PC-3 (cell line): ENCODE measurements at regions of chr21 and their contacts with region 1.

Region 1: GRCh38 chr21:36927719-36928117 is 38.8 kb downstream of the HLCS start:
- DNase-seq: peak; percentile 95
- ATAC-seq: peak; percentile 93
- H3K4me3 ChIP-seq: no peak overlapping the region
- H3K27ac ChIP-seq: peak overlapping the region; percentile 68
- H3K4me1 ChIP-seq: peaks cover 22% of the 10 kb centered on the region
- H3K27me3 ChIP-seq: no peaks in the 10 kb centered on the region
- CTCF ChIP-seq: peak; percentile 98

Region 2: GRCh38 chr21:35882791-35883240 is 1044.9 kb before region 1 on chr21:
- CTCF ChIA-PET with region 1: no interaction called
- POLR2A ChIA-PET with region 1: no interaction called
- intact Hi-C with region 1: no loop called
- DNase-seq: no peak
- ATAC-seq: no peak
- H3K4me3 ChIP-seq: no peak overlapping the region
- H3K27ac ChIP-seq: no peak overlapping the region
- H3K4me1 ChIP-seq: no peaks in the 10 kb centered on the region
- H3K27me3 ChIP-seq: peaks cover 38% of the 10 kb centered on the region
- CTCF ChIP-seq: no peak

Region 3: DNA sequence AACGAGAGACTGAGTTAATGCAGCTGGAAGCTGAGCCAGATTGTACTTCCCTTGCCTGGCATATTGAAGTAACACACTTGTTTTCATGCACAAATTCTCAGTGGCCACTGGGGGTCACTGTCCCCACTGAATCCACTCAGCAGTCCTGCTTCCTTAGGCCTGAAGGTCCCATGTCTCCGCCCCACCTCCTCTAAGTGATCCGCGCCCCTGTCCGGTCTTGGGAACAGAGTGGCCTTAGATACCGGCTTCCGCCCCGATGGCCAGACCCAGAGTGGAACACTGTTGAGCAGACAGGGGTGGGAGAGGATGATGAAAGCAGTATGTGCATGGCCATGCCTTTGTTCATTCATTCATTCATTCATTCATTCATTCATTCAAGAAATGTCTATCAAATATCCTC is 507.7 kb before region 1 on chr21:
- CTCF ChIA-PET with region 1: no interaction called
- POLR2A ChIA-PET with region 1: no interaction called
- intact Hi-C with region 1: loop called (anchors 2 kb)
- DNase-seq: peak; percentile 90
- ATAC-seq: peak; percentile 92
- H3K4me3 ChIP-seq: no peak overlapping the region
- H3K27ac ChIP-seq: no peak overlapping the region; the same call in 1 of the 2 replicates
- H3K4me1 ChIP-seq: no peaks in the 10 kb centered on the region; the same call in 1 of the 2 replicates
- H3K27me3 ChIP-seq: no peaks in the 10 kb centered on the region
- CTCF ChIP-seq: peak; percentile 88

Region 4: GRCh38 chr21:36698981-36699891 is 228.5 kb before region 1 on chr21 and contains the start of gene SIM2:
- CTCF ChIA-PET with region 1: no interaction called
- POLR2A ChIA-PET with region 1: no interaction called
- intact Hi-C with region 1: loop called (anchors 5 kb)
- DNase-seq: peak; percentile 92
- ATAC-seq: peak; percentile 65
- H3K4me3 ChIP-seq: peak within 1 kb of the TSS; percentile 95
- H3K27ac ChIP-seq: peak within 1 kb of the TSS; percentile 84
- H3K4me1 ChIP-seq: peaks cover 19% of the 10 kb centered on the region
- H3K27me3 ChIP-seq: no peaks in the 10 kb centered on the region
- CTCF ChIP-seq: no peak
- total RNA-seq, gene SIM2: 71.2 and 104 TPM in 2 replicates

Region 5: GRCh38 chr21:36756527-36756926 is 171.2 kb before region 1 on chr21:
- CTCF ChIA-PET with region 1: interaction called, 4 read pairs
- POLR2A ChIA-PET with region 1: no interaction called
- intact Hi-C with region 1: loop called (anchors 1 kb)
- DNase-seq: peak; percentile 76
- ATAC-seq: peak; percentile 73
- H3K4me3 ChIP-seq: no peak overlapping the region
- H3K27ac ChIP-seq: peak overlapping the region; percentile 56
- H3K4me1 ChIP-seq: peaks cover 21% of the 10 kb centered on the region
- H3K27me3 ChIP-seq: no peaks in the 10 kb centered on the region
- CTCF ChIP-seq: no peak

Region 6: DNA sequence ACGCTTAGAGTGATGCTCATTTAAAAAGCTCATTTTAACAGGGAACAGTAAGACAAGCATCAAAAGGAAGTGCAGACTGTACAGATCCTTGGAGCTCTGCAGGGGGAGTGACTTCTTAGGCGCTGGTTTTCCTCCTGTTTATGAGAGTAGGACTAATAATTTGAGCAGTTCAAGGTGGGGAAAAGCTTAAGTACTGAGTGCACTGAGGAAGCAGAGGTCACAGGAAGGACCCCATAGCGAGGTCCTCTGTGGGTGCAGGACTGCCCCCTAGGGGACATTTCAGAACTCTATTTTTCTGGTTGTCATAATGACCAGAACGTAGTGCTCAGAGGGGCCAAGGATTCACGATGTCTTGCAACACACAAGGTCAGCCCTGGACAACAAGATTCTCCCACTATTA is 73.3 kb before region 1 on chr21:
- CTCF ChIA-PET with region 1: no interaction called
- POLR2A ChIA-PET with region 1: no interaction called
- intact Hi-C with region 1: no loop called
- DNase-seq: peak; percentile 62
- ATAC-seq: no peak
- H3K4me3 ChIP-seq: no peak overlapping the region
- H3K27ac ChIP-seq: no peak overlapping the region
- H3K4me1 ChIP-seq: peaks cover 54% of the 10 kb centered on the region
- H3K27me3 ChIP-seq: no peaks in the 10 kb centered on the region
- CTCF ChIP-seq: peak; percentile 85

Region 7: DNA sequence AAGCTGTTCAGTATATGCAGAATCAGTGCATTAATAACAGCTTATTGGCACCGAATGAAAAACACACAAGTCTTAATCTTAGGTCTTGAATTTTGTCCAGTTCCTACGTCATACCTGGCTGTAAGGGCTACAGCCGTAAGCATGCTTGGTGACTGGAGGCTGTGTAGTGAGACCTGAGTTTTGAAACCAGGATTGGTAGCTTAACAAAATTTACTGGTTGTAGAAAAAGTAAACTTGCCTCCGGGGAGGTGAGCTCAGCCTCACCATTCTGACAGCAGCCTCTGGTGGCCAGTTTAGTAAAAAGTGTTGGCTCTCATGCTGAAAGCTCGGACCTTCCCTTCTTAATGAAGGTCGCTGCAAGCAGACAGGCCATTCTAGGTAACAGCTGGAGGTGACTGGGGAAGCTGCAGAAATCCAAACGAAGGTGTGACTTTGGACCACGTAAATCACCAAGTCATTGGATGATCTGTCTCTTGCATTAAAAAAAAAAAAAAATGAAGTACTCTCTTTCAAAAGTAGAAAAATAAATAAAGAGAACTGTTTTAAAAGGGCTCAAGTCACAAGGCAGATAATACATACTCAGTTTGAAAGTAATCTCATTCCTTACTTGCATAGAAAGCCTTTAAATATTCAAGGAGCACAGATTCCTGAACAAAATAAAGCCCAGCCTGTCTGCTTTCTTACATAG is 10.1 kb before region 1 on chr21:
- CTCF ChIA-PET with region 1: interaction called, 12 read pairs
- POLR2A ChIA-PET with region 1: no interaction called
- intact Hi-C with region 1: no loop called
- DNase-seq: peak; percentile 87
- ATAC-seq: peak; percentile 85
- H3K4me3 ChIP-seq: no peak overlapping the region
- H3K27ac ChIP-seq: peak overlapping the region; percentile 88
- H3K4me1 ChIP-seq: peaks cover 30% of the 10 kb centered on the region
- H3K27me3 ChIP-seq: no peaks in the 10 kb centered on the region
- CTCF ChIP-seq: peak; percentile 90